ENCODE measurements at regions of chr1 and their contacts with region 1.

Region 1: DNA sequence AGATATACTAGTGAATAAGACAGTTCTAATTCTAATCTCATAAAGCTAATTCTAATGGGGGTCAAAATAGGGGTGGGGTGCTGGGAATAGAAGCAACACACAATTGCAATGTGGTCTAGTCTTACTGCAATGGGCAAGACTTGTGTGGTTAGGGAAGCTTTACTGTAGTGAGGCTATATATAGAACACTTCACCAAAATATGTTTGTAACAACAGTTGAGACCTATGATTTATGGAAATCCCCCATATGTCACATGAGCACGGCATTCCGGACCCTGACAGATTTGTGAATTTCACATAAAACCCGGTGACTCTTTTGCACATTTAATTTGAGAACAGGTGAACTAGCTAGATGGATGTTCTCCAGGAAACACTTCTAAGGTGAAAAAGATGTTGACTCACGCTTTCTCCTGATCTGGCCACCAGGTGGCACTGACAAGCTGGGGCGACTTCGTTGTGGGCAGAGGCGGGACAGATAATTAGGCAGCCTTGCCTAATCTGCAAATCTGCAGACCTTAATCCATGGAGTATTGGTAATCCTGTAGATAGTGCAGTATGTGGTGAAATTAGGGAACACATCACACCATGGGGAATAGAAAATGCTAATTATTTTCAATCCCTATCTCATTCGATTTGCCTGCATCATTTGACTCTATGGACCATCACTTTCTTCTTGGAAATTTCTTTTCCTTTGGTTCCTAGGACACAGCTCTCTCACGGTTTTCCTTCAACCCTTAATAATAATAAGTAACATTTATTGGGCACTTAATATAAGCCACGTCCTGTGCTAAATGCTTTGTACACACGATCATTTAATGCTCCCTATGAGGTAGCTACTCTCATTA is 37.7 kb downstream of the KIAA0040 start:
- DNase-seq: peak; percentile 82
- H3K4me3 Mint-ChIP-seq: no peak overlapping the region
- H3K27ac Mint-ChIP-seq: no peak overlapping the region
- H3K4me1 Mint-ChIP-seq: peaks cover 17% of the 10 kb centered on the region
- H3K27me3 Mint-ChIP-seq: peaks cover 41% of the 10 kb centered on the region
- CTCF ChIP-seq: peak; percentile 95

Region 2: GRCh38 chr1:174550296-174550695 is 604.6 kb before region 1 on chr1:
- CTCF ChIA-PET with region 1: no interaction called
- POLR2A ChIA-PET with region 1: no interaction called
- intact Hi-C with region 1: no loop called
- DNase-seq: peak; percentile 33
- H3K4me3 Mint-ChIP-seq: no peak overlapping the region
- H3K27ac Mint-ChIP-seq: no peak overlapping the region
- H3K4me1 Mint-ChIP-seq: no peaks in the 10 kb centered on the region
- H3K27me3 Mint-ChIP-seq: no peaks in the 10 kb centered on the region
- CTCF ChIP-seq: no peak

Region 3: GRCh38 chr1:174874331-174875053 is 280.4 kb before region 1 on chr1:
- CTCF ChIA-PET with region 1: no interaction called
- POLR2A ChIA-PET with region 1: no interaction called
- intact Hi-C with region 1: no loop called
- DNase-seq: no peak
- H3K4me3 Mint-ChIP-seq: no peak overlapping the region
- H3K27ac Mint-ChIP-seq: no peak overlapping the region
- H3K4me1 Mint-ChIP-seq: no peaks in the 10 kb centered on the region
- H3K27me3 Mint-ChIP-seq: no peaks in the 10 kb centered on the region
- CTCF ChIP-seq: no peak

Region 4: DNA sequence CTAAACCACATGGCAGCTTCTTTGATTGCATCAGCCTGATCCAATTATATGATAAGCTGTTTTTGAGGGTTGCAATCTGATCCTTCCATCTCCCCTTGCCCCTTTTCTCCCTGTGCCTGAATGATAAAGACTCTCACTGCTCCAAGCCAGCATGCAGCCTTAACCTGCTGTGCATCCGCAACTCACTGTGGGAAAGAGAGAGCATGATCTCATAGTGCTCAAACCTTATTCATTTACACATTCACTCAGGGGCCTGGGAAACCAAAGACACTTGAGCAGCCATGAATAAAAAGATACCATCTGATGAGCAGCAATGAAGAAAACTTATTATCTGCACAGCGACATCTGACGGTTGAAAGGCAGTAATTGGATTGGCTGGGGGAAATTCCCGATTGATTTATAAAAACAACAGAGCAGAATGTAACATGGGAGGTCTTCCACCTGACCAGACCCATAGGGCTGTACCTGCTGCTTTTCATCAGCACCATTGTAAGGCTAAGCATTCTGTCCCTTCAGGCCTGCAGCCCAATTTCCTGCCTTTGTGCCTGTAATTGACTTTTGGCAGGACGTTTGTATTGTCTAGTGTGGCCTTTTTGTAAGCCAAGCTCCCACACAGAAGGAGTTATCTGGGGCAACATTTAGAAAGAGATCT is 24.7 kb before region 1 on chr1:
- CTCF ChIA-PET with region 1: interaction called, 28 read pairs
- POLR2A ChIA-PET with region 1: no interaction called
- intact Hi-C with region 1: no loop called
- DNase-seq: no peak
- H3K4me3 Mint-ChIP-seq: no peak overlapping the region
- H3K27ac Mint-ChIP-seq: no peak overlapping the region
- H3K4me1 Mint-ChIP-seq: peaks cover 14% of the 10 kb centered on the region
- H3K27me3 Mint-ChIP-seq: no peaks in the 10 kb centered on the region
- CTCF ChIP-seq: no peak

Region 5: DNA sequence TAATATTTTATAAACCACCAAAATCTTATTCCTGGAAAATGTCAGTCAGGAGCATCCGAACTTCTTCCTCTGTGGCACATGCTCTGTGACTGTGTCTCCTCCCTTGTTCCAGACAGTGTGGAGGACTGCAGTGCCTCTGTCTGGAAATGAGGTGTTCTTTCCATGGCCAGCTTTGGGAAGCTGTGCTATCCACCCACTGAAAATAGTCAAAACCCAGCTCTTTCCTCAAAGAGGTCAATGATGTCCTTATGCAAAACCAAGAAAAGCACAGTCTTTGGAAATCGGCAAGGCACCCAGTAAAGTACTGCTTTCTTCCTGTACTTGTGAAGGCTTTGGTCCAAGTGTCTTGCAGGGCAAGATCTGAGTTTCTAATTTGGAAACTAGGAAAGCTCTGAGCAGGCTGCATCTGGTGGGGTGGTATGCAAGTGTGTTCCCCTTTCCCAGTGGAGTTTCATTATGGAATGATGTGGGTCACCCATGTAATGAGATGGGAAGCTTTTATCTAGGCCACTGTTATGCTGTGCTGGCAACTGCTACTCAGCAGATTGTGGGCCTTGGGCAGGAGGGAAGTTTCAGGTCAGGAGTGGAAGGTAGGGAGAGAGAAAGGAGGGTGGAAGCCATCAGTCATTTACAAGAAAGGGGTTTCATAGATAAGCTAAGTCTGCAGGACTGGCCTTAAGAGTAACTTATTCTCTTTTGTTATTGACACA is 31.7 kb after region 1 on chr1:
- CTCF ChIA-PET with region 1: interaction called, 78 read pairs
- POLR2A ChIA-PET with region 1: interaction called, 4 read pairs
- intact Hi-C with region 1: no loop called
- DNase-seq: no peak
- H3K4me3 Mint-ChIP-seq: no peak overlapping the region
- H3K27ac Mint-ChIP-seq: no peak overlapping the region
- H3K4me1 Mint-ChIP-seq: peaks cover 26% of the 10 kb centered on the region
- H3K27me3 Mint-ChIP-seq: no peaks in the 10 kb centered on the region
- CTCF ChIP-seq: no peak

Region 6: DNA sequence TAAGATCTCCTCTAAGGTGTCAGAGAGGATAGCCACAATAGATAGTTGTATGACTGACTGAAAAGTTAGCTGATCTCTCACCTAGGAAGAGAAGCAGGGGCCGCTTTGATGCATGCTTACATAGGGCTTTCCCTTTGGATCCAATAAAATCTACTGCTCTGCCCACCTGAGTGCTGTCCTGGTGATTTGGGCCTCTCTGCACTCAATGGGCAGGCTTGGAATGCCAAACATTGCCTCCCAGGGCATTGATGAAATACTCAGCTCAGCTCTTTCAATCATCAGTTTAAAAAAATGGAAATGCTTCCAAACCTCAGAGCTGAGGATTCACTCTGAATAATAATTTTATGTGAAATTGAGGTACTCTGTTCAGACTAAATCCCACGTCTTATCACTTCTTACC is 72.2 kb after region 1 on chr1:
- CTCF ChIA-PET with region 1: interaction called, 306 read pairs
- POLR2A ChIA-PET with region 1: interaction called, 13 read pairs
- intact Hi-C with region 1: no loop called
- DNase-seq: no peak
- H3K4me3 Mint-ChIP-seq: no peak overlapping the region
- H3K27ac Mint-ChIP-seq: no peak overlapping the region
- H3K4me1 Mint-ChIP-seq: peaks cover 6% of the 10 kb centered on the region
- H3K27me3 Mint-ChIP-seq: no peaks in the 10 kb centered on the region
- CTCF ChIP-seq: no peak

Region 7: GRCh38 chr1:175297291-175297690 is 142.4 kb after region 1 on chr1:
- CTCF ChIA-PET with region 1: interaction called, 11 read pairs
- POLR2A ChIA-PET with region 1: no interaction called
- intact Hi-C with region 1: no loop called
- DNase-seq: no peak
- H3K4me3 Mint-ChIP-seq: no peak overlapping the region
- H3K27ac Mint-ChIP-seq: no peak overlapping the region
- H3K4me1 Mint-ChIP-seq: no peaks in the 10 kb centered on the region
- H3K27me3 Mint-ChIP-seq: no peaks in the 10 kb centered on the region
- CTCF ChIP-seq: no peak

Region 8: GRCh38 chr1:175353066-175353465 is 198.2 kb after region 1 on chr1:
- CTCF ChIA-PET with region 1: interaction called, 18 read pairs
- POLR2A ChIA-PET with region 1: no interaction called
- intact Hi-C with region 1: no loop called
- DNase-seq: no peak
- H3K4me3 Mint-ChIP-seq: no peak overlapping the region
- H3K27ac Mint-ChIP-seq: no peak overlapping the region
- H3K4me1 Mint-ChIP-seq: no peaks in the 10 kb centered on the region
- H3K27me3 Mint-ChIP-seq: peaks cover 54% of the 10 kb centered on the region
- CTCF ChIP-seq: no peak

Region 9: DNA sequence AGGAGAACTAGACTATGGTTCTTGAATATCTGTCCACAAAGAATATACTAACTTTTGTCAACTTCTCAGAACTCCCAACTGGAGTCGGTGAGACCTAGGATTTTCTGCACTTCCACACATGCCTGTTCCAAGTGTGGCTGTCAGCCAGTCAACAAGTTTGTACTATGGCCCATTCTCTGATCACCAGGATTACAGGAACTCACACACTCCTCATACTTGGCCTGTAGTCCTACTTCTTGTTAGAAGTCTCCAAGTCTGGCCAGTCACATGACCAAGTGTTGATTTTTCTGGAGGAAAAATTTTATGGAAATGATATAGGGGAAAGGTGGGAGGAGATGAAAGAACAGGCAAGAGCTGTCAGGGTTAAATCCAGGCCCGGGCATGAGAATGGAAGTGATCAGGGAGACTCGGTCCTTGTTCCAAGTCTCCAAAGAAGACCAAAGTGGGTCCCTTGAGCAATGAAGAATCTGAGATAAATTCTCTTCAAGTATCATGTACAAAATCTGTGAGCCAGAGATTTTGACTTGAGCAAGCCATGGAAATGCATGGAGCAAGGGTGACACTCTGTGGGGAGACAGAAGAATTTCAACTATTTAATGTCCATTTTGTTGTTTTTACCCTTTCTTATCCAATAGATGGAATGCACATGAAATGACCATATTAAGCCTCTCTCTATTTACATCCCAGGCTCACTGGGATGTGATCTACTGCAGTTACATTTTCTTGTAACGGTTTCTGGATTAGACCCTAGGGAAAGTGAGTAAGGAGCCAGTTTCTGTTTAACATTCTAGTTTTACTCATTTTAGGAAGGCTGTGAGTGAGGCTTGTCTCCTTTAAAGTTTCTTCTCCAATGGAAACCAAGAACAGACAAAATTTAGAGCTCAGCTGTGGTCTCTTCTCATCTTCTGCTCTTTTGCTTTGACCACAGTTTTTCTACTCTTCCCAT is 1688.8 kb after region 1 on chr1:
- CTCF ChIA-PET with region 1: interaction called, 5 read pairs
- POLR2A ChIA-PET with region 1: no interaction called
- intact Hi-C with region 1: loop called (anchors 5 kb)
- DNase-seq: peak; percentile 53
- H3K4me3 Mint-ChIP-seq: no peak overlapping the region
- H3K27ac Mint-ChIP-seq: no peak overlapping the region
- H3K4me1 Mint-ChIP-seq: no peaks in the 10 kb centered on the region
- H3K27me3 Mint-ChIP-seq: no peaks in the 10 kb centered on the region
- CTCF ChIP-seq: peak; percentile 84

Measured in MCF 10A (cell line).